OCI-LY7 (cell line): ENCODE measurements at regions of chr1 and their contacts with region 1.

Region 1: DNA sequence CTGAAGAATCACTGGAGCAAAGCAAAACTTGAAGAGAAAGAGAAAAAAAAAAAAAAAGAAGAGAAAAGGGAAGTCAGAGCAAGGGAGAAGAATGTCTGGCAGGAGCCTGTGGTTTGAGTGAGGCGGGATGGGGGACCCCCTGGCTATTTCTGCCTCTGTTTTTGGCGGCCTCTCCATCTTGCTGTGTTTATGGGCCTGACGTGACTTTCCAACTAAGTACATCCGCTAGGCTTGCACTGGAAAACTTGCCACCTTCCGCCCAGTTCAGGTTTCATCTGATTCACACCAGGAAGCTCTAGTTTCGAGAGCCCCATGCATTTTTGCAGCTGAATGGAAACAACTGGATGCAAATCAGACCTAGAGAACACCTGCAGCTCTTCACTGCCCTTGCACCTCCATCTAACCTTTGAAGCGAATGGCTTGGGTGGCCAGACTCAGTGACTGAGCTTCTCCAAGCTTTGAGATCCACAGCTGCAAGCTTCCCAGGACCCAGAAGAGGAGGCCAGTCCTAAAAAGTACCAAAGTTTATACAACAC is 28.0 kb downstream of the TBX15 start:
- DNase-seq: peak; percentile 94
- H3K4me3 ChIP-seq: peak overlapping the region; percentile 48
- H3K27ac ChIP-seq: peak overlapping the region; percentile 92
- H3K4me1 ChIP-seq: peaks cover 39% of the 10 kb centered on the region
- CTCF ChIP-seq: no peak

Region 2: GRCh38 chr1:118949315-118949714 is 10.8 kb before region 1 on chr1:
- CTCF ChIA-PET with region 1: no interaction called
- POLR2A ChIA-PET with region 1: interaction called, 10 read pairs
- intact Hi-C with region 1: no loop called
- DNase-seq: no peak
- H3K4me3 ChIP-seq: no peak overlapping the region
- H3K27ac ChIP-seq: no peak overlapping the region
- H3K4me1 ChIP-seq: no peaks in the 10 kb centered on the region
- CTCF ChIP-seq: no peak

Region 3: DNA sequence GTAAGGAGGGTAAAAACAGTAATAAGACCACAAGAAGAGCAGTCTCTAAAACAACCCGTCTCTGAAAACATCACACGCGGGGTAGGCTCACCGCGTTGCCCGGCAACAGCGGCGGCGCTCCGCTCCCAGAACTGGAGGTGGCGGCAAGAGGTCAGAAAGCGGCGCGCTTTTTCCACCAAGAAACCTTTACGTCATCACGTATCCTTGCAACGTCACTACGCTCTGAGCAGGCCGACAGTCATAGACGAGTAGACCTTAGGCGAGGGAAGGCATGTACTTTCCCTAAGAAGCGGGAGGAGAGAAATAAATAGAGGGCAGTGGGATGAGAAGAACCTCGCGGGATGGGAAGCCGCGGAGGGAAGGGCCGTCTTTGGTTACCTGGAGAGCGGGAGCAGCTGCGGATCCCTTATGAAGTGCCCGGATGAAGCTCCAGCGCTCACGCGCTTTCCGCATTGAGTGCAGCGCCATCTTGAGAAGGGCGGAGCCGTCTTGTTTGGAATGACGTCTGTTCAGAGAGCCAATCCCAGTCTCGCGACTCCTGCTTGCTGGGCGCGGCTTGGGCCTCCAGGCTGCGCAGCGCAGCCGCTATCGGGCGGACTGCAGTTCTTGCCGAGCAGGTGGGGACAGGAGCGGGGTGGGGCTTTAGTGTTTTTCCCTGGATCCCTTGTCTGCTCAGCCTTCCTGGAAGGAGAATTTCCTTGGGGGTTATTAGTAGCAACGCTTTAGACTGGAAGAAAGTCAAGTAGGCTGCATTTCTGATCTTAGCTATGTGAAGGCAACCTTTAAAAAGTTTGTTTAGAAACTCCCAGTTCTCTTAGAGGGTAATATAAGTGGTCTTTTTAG is 180.3 kb after region 1 on chr1 and contains the start of gene WARS2:
- CTCF ChIA-PET with region 1: no interaction called
- POLR2A ChIA-PET with region 1: no interaction called
- intact Hi-C with region 1: loop called (anchors 1 kb)
- DNase-seq: peak; percentile 99
- H3K4me3 ChIP-seq: peak within 1 kb of the TSS; percentile 75
- H3K27ac ChIP-seq: peak within 1 kb of the TSS; percentile 72
- H3K4me1 ChIP-seq: peaks cover 27% of the 10 kb centered on the region
- CTCF ChIP-seq: no peak; the same call in 1 of the 2 replicates
- total RNA-seq, gene WARS2: 8.9 and 11.0 TPM in 2 replicates